Psoas muscle (tissue), 8 donors: ENCODE measurements at regions of chr14 and their contacts with region 1.

Region 1: DNA sequence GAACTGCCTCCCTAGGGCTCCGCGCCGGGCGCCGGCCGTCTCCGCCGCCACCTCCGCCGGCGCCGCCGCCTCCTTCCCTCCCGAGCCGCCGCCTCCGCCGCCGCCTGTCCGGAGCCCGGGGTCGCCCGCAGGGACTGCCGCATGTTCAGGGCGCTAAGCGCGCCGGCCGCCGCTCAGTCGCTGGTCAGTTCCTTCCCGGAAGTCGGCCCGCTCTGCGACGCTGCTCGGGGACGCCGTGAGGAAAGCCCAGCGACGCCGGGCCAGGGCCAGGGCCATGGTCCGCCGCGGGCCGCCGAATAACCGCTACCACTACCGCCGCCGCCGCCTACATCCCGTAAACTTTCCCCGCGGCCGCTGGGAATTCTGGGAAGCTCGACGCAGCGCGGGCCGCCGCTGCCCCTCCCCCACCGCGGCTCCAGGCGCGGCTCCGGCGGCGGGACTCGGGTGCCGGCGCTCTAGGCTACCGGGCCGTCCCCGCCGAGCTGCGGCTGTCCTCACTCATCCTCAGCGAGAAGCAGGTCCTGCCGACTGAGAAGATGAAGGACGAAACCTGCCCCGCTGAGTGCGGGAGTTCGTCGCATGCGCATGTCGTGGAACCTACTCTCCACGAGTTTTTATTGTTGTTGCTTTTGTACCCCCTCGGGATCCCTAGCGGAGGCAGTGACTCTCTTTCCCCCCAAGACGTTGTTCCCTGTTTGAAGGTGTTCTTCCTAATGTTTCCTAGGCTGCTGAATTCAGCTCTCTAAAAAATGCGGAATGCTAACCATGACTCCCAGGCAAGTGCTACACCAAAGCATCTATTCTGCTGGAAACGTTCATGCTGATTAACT is at the start of gene SAV1:
- DNase-seq: peak; percentile 86 to 91
- ATAC-seq: peak; percentile 94 to 95 (median 95)
- H3K4me3 ChIP-seq: peak within 1 kb of the TSS; percentile 87
- H3K27ac ChIP-seq: peak within 1 kb of the TSS; percentile 97
- H3K4me1 ChIP-seq: peaks cover 12% of the 10 kb centered on the region
- H3K27me3 ChIP-seq: no peaks in the 10 kb centered on the region
- CTCF ChIP-seq: no peak
- total RNA-seq, gene SAV1: 18.1 to 37.1 (median 24.8) TPM

Region 2: DNA sequence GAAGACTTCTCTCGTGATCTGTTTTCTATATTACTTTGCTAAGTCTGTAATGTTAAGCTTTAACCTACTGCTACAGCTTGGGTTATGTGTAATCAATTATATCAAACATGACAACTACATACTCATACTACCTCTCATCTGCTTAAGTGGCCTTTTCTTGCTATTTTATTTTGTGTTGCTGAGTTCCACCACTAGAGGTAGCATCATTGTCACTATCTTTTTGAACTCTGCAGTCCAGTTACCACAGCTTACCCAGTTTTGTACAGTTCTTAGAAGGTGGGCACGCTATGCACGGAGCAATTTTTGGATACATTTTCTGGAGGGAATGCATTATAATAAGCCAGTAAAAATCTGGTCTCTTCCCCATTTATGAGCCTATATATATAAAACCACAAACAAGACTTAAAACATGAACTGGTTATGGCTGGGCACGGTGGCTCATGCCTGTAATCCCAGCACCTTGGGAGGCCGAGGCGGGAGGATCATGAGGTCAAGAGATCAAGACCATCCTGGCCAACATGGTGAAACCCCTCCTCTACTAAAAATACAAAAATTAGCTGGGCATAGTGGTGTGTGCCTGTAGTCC is 48.6 kb before region 1 on chr14:
- intact Hi-C with region 1: no loop called
- DNase-seq: no peak
- ATAC-seq: peak in 3 of 4 donors; percentile 47 to 74 (median 49)
- H3K4me3 ChIP-seq: no peak overlapping the region
- H3K27ac ChIP-seq: no peak overlapping the region
- H3K4me1 ChIP-seq: no peaks in the 10 kb centered on the region
- H3K27me3 ChIP-seq: no peaks in the 10 kb centered on the region
- CTCF ChIP-seq: peak; percentile 56

Region 3: GRCh38 chr14:50726372-50727107 is 58.3 kb after region 1 on chr14:
- intact Hi-C with region 1: loop called in 1 of 2 experiments (anchors 10 kb)
- DNase-seq: no peak
- ATAC-seq: no peak
- H3K4me3 ChIP-seq: no peak overlapping the region
- H3K27ac ChIP-seq: no peak overlapping the region
- H3K4me1 ChIP-seq: no peaks in the 10 kb centered on the region
- H3K27me3 ChIP-seq: no peaks in the 10 kb centered on the region
- CTCF ChIP-seq: no peak

Region 4: DNA sequence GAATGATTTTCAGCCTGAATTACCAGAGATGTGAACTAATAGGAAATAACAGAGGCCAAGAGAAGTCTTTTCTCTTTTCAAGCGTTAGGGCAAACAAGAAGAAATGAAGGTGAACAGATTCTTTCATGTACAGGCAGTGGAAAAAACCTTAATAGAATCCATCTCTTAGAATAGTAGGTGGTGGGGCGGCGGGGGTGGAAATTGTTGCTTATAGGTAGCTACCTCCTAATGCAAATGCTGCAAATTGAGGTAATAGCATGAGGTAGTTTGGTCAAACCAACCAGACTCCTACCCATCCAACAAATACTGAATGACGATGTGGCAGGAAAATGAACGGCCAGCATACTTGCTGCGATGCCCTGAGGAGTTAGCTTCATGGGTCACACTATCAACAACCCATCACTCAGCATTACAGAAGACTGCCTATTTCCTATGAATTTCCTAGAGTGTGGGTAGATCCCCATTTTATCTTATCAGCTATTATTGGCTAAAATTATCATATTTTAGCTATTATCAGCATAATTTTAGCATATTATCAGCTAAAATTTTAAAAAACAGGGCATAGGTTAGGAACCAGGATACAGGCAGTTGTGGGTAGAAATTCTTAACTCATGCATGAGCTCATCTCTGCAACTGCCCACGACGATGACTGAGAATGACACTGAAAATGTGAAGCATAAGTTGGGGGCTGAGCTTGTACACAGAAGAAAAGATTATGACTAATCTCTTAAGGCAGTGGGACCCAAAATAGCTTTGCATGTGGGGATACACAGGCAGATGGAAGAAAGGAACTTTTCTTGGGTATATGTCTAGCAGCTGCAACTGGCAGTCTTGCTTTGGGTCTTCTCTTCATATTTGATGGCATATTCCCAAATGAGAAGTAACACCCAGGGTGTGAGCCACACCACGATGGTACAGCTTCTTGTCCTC is 94.1 kb after region 1 on chr14:
- intact Hi-C with region 1: no loop called
- DNase-seq: no peak
- ATAC-seq: no peak
- H3K4me3 ChIP-seq: no peak overlapping the region
- H3K27ac ChIP-seq: peak overlapping the region; percentile 30
- H3K4me1 ChIP-seq: peaks cover 5% of the 10 kb centered on the region
- H3K27me3 ChIP-seq: no peaks in the 10 kb centered on the region
- CTCF ChIP-seq: no peak